PC-3 (cell line): ENCODE measurements at regions of chr19 and their contacts with region 1.

Region 1: GRCh38 chr19:50705422-50706019 is 14.1 kb downstream of the SHANK1 start:
- DNase-seq: peak; percentile 86
- ATAC-seq: peak; percentile 87
- H3K4me3 ChIP-seq: no peak overlapping the region
- H3K27ac ChIP-seq: no peak overlapping the region
- H3K4me1 ChIP-seq: peaks cover 15% of the 10 kb centered on the region
- H3K27me3 ChIP-seq: peaks cover 19% of the 10 kb centered on the region
- CTCF ChIP-seq: peak; percentile 89

Region 2: DNA sequence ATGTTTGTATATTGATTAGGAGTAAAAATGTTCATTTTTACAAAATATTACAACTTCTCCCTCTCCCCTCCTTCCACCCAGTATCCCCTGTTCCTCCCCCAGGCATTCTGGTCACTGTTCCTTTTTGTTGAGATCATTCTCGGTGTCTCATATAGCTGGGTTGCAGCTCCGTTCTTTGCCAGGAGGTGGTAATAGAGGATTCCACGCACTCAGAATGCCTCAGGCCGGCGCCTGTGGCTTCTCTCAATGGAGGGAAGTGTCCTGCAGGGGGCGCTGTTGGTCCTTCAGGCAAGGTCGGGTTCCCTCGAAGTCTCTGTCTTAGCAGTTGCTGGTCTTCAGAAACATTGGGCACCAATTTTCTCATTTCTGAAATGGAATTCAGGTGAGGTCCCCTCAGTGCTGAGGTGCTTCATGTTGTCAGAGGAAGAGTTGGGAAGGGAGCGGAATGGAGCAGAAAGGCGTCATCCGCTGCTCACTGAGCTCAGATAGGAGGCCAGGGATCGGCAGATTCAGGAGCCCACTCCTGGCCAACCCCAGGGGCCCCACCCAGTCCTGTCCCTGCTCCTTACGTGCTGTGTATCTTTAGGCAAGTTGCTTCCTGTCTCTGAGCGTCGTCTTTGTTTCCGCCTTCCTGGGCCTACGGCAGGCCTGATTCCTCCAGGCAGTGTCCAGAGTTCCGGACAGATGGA is 218.6 kb before region 1 on chr19:
- CTCF ChIA-PET with region 1: no interaction called
- POLR2A ChIA-PET with region 1: interaction called, 18 read pairs
- intact Hi-C with region 1: no loop called
- DNase-seq: peak; percentile 83
- ATAC-seq: peak; percentile 41; the same call in 1 of the 2 replicates
- H3K4me3 ChIP-seq: no peak overlapping the region
- H3K27ac ChIP-seq: no peak overlapping the region
- H3K4me1 ChIP-seq: no peaks in the 10 kb centered on the region
- H3K27me3 ChIP-seq: no peaks in the 10 kb centered on the region
- CTCF ChIP-seq: peak; percentile 98

Region 3: GRCh38 chr19:50676625-50677197 is 28.8 kb before region 1 on chr19:
- CTCF ChIA-PET with region 1: no interaction called
- POLR2A ChIA-PET with region 1: no interaction called
- intact Hi-C with region 1: no loop called
- DNase-seq: no peak
- ATAC-seq: no peak
- H3K4me3 ChIP-seq: no peak overlapping the region
- H3K27ac ChIP-seq: no peak overlapping the region
- H3K4me1 ChIP-seq: no peaks in the 10 kb centered on the region
- H3K27me3 ChIP-seq: peaks cover 36% of the 10 kb centered on the region
- CTCF ChIP-seq: no peak

Region 4: DNA sequence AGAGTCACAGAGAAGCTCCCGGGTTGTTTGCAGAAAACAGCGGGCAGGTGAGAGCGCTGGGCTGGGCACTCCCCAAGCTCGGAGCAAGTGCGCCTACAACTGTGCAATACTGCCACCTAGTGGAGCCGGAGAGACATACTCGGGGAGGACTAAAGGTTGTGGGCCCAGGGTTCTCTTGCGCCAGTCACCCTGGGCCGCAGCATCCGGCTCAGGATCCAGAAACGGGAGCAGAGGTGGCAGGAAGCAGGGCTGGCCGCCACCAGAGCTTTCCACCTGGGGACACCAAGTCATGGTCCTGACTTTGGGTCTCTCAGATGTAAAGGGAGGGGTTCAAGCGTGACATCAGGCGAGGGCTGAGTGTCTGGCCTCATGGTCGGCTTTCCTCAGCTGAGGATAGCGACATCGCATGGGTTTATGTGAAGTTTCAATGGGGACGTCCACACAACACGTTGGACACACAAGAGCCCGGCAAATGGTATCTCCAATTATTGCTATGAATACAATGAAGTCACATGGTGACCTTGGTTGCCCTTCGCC is 216.9 kb after region 1 on chr19:
- CTCF ChIA-PET with region 1: no interaction called
- POLR2A ChIA-PET with region 1: no interaction called
- intact Hi-C with region 1: loop called (anchors 5 kb)
- DNase-seq: peak; percentile 96
- ATAC-seq: peak; percentile 100
- H3K4me3 ChIP-seq: peak overlapping the region; percentile 36; the same call in 1 of the 2 replicates
- H3K27ac ChIP-seq: no peak overlapping the region
- H3K4me1 ChIP-seq: peaks cover 26% of the 10 kb centered on the region
- H3K27me3 ChIP-seq: peaks cover 11% of the 10 kb centered on the region
- CTCF ChIP-seq: peak; percentile 98